Dendritic cell treated with granulocyte-macrophage colony-stimulating factor and Interleukin-4, amounts not matched to agents 40 ng/mL and 50 ng/mL, for 4 days (primary cell): ENCODE measurements at regions of chr2 and their contacts with region 1.

Region 1: DNA sequence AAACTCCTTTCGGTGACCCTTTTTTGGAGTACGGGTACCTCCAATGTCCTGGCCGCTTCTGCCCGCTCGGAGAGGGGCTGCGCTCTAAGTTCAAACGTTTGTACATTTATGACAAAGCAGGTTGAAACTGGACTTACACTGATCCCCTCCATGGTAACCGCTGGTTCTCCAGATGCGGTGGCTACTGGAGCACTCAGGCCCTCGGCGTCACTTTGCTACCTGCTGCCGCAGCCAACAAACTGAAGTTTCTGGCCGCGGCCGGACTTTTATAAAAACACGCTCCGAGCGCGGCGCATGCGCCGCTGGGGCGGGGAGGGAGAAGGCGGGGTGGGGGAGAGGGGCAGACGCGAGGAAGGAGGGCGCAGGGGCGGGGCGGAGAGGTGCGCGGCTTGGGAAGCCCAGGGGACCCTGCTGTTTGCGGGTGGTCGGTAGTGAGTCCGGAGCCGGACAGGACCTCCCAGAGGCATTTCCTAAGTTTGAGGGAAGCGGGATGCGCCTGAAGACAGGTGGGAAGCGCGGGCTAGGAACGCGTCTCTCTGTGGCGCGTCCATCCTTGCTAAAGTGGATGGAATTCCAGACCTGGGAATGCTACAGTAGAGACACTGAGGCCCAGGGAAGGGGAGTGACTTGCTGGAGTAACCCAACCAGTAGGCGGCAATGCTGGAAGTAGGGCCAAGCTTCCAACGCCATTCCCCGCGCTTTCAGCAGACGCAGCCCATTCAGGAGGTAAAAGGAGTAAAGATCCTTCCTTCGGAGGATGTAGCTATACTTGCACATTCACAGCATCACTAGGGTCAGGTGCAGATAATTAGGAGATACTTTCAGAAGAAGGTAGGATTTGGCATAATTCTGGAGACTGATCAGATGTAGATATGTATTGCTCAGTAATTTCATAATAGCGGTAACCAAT is at the start of gene CXCR4:
- H3K4me3 Mint-ChIP-seq: peak within 1 kb of the TSS; percentile 95
- H3K27ac Mint-ChIP-seq: peak within 1 kb of the TSS; percentile 90
- H3K4me1 Mint-ChIP-seq: peaks cover 53% of the 10 kb centered on the region
- H3K27me3 Mint-ChIP-seq: no peaks in the 10 kb centered on the region

Region 2: GRCh38 chr2:135843671-135844070 is 274.5 kb before region 1 on chr2:
- intact Hi-C with region 1: no loop called
- H3K4me3 Mint-ChIP-seq: no peak overlapping the region
- H3K27ac Mint-ChIP-seq: no peak overlapping the region
- H3K4me1 Mint-ChIP-seq: no peaks in the 10 kb centered on the region
- H3K27me3 Mint-ChIP-seq: no peaks in the 10 kb centered on the region

Region 3: GRCh38 chr2:135985018-135985825 is 132.9 kb before region 1 on chr2 and contains the start of gene DARS1:
- intact Hi-C with region 1: loop called (anchors 5 kb)
- H3K4me3 Mint-ChIP-seq: peak within 1 kb of the TSS; percentile 87
- H3K27ac Mint-ChIP-seq: peak within 1 kb of the TSS; percentile 99
- H3K4me1 Mint-ChIP-seq: peaks cover 27% of the 10 kb centered on the region
- H3K27me3 Mint-ChIP-seq: no peaks in the 10 kb centered on the region

Region 4: DNA sequence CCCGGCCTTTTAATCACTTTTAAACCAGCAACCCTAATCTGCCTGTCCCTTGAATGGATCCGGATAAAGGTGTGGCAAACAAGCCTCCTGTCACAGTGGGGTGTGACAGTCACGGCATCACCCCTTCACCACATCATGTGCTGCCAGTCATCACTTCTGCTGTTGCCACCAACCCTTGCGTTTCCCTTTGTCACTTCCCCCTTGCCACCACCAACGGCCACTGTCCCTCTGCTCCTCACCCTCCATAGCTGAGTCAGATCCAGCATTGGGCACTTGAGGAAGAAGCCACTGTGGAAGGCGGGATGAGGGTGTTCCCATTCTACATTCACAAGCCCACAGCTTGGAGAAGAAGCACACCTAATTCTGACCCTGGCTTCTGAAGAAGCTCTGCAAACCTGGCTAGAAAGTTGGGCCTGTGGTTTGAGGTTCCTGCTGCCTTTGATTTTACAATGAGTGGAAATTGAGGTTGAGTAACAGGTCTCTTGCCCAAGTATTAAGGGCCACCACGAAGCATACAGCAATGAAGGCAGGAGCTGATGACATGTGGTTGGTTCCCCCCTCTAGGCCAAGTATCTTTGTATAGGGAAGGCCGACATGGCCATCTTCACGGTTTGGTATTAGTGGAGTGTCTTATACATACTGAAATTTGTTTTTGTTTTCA is 109.8 kb before region 1 on chr2:
- intact Hi-C with region 1: loop called (anchors 2 kb)
- H3K4me3 Mint-ChIP-seq: peak overlapping the region; percentile 37
- H3K27ac Mint-ChIP-seq: peak overlapping the region; percentile 94
- H3K4me1 Mint-ChIP-seq: peaks cover 71% of the 10 kb centered on the region
- H3K27me3 Mint-ChIP-seq: no peaks in the 10 kb centered on the region

Region 5: DNA sequence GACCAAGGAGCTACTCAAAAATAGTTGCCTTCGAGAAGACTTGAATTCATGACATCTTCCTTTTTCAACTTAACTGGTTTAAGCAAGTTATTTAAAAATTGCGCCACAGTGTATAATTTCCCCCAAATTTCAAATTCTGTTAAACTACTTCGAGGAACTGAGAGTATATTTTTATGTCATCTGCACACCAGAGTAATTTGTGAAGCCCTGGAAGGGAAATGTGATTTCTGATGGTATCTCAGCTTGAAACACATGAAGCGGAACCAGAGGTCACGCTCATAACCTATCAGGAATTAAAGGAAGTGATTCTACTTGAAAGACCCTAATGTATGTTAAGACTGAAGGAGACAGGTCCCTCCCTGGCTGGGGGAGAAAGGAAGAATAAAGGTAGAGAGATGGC is 98.9 kb before region 1 on chr2:
- intact Hi-C with region 1: no loop called
- H3K4me3 Mint-ChIP-seq: no peak overlapping the region
- H3K27ac Mint-ChIP-seq: peak overlapping the region; percentile 84
- H3K4me1 Mint-ChIP-seq: peaks cover 57% of the 10 kb centered on the region
- H3K27me3 Mint-ChIP-seq: no peaks in the 10 kb centered on the region

Region 6: DNA sequence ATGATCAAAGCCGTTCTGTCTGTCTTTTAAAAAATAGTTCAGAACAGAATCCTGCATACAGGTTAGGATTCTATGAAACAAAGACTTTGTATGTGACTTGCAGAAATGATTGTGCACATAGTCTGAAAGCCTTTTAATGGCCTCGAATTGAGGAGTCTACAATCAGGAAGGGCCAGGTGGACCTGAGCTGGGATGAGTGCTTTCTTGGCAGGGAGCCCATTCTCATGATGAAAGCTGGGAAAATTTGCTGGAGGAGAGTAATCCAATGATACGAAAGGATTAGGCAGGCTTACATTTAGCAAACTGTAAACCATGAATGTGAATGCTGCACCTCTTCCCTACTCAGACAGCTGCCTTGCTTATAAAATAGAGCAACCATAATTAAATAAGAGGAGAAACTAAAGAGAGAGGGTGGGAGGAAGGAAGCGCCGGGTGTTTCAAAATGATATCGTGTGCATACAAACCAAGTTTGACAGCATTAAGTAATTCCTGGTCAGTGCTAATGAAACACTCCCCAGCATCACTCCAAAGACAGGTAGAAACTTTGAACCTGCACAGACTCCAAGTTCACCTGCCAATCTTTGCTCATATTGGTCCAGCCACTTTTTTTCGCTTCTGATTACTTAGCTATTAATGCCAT is 23.5 kb after region 1 on chr2:
- intact Hi-C with region 1: no loop called
- H3K4me3 Mint-ChIP-seq: no peak overlapping the region
- H3K27ac Mint-ChIP-seq: no peak overlapping the region
- H3K4me1 Mint-ChIP-seq: peaks cover 42% of the 10 kb centered on the region
- H3K27me3 Mint-ChIP-seq: peaks cover 18% of the 10 kb centered on the region

Region 7: DNA sequence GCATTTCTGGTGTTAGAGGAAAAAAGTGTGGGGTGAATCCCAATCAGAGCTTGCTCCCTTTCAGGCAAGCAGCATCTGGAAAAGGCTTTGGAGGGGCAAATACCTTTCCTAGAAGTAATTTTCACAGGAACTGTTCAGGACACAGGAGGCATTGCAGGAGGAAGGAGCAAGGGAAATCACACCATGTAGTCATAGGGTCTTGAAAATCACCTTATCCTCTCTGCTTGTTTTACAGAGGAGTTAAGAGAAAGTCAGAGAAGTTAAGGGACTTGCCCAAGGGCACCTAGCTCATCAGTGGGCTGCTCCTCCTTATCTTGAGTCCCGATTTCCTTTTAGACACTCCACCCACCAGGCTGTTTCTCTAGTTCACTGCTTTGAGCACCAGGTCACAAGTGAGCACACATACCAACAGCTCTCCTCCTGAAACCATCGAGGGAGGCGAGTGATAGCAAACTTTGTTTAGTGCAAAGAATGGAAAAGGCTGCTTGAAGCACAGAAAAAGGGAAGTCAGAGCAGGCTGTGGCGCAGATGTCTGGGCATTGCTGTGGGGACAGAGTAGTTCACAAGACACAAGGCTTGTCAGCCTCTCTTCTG is 89.0 kb after region 1 on chr2:
- intact Hi-C with region 1: loop called (anchors 5 kb)
- H3K4me3 Mint-ChIP-seq: no peak overlapping the region
- H3K27ac Mint-ChIP-seq: peak overlapping the region; percentile 75
- H3K4me1 Mint-ChIP-seq: peaks cover 71% of the 10 kb centered on the region
- H3K27me3 Mint-ChIP-seq: no peaks in the 10 kb centered on the region

Region 8: DNA sequence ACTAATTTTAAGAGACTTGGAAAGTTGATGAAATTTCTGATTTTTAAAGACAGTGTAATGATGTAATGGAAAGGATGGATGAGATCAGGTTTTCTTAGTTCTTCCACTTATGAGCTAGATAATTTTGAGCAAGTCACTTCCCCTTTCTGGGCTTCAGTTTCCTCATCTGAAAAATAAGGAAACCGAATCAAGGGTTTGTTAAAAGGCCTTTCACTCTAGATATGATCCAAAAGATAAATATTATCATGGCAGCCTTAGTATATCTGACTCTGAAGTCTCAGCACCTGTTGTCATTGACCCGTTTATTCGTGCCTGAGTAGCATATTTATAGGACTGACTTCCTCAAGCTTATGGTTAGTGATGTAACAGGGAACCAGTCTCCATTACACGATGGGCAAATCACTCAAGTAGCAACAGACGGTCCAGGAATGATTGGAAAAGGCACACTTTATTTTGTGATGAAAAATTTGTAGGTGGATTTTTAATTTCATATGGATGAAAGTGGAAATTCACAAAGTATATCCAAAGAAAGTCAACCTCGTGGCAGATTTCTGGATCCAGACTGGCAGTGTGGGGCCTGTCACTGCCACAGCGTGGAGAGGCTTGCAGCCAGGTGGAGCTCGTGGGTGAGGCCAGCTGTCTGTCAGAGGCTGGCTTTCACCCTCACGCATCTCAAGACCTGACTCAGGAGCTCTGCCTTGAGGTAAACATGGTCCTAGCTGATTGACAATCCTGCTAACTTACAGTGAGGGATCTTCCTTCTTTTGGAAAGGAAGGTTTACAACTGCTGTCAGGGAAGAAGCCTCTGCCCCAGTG is 137.7 kb after region 1 on chr2:
- intact Hi-C with region 1: loop called (anchors 5 kb)
- H3K4me3 Mint-ChIP-seq: no peak overlapping the region
- H3K27ac Mint-ChIP-seq: peak overlapping the region; percentile 79
- H3K4me1 Mint-ChIP-seq: peaks cover 48% of the 10 kb centered on the region
- H3K27me3 Mint-ChIP-seq: no peaks in the 10 kb centered on the region

Region 9: GRCh38 chr2:136327162-136327852 is 209.1 kb after region 1 on chr2:
- intact Hi-C with region 1: loop called (anchors 5 kb)
- H3K4me3 Mint-ChIP-seq: no peak overlapping the region
- H3K27ac Mint-ChIP-seq: peak overlapping the region; percentile 90
- H3K4me1 Mint-ChIP-seq: peaks cover 81% of the 10 kb centered on the region
- H3K27me3 Mint-ChIP-seq: no peaks in the 10 kb centered on the region

Region 10: DNA sequence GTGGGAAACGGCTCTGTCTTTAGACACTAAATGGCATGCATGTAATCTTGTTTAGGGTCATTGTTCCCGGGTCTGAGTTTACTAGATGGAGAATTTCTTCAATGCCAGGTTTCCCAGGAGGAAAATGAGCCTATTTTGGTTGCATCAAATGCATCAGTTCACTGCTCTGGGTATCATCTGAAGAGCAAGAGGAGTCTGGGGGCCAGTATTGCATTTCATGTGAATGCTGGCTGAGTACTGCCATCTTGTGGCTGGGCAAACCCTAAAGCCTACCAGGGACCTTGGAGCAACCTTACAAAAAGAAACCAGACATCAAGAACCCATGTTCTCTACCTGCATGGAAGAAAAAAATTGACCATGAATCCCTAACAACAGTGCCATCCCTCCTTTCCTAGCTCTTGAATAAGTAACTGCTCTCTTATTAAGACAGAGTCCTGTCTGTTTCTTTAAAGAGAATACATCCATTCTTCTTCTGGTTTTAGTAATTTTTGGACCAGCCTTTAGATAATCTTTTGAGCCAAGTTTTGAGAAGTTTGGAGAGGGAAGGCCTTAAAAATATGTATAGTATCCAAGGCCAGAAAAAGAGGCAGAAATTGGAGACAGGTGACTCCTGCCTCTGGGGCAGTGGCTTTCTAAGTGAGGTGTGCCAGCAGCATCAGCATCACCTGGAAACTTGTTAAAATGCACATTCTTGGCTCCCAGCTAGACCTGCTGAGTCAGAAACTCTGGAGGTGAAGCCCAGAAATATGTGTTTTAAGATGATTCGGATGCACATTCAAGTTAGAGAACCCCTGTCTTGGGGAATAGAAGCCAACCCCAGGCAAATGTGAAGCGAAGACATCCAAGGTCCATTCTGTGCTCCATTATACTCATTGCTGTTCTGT is 260.8 kb after region 1 on chr2:
- intact Hi-C with region 1: loop called (anchors 5 kb)
- H3K4me3 Mint-ChIP-seq: no peak overlapping the region
- H3K27ac Mint-ChIP-seq: no peak overlapping the region
- H3K4me1 Mint-ChIP-seq: peaks cover 39% of the 10 kb centered on the region
- H3K27me3 Mint-ChIP-seq: no peaks in the 10 kb centered on the region